ENCODE measurements at regions of chr3 and their contacts with region 1.

Region 1: DNA sequence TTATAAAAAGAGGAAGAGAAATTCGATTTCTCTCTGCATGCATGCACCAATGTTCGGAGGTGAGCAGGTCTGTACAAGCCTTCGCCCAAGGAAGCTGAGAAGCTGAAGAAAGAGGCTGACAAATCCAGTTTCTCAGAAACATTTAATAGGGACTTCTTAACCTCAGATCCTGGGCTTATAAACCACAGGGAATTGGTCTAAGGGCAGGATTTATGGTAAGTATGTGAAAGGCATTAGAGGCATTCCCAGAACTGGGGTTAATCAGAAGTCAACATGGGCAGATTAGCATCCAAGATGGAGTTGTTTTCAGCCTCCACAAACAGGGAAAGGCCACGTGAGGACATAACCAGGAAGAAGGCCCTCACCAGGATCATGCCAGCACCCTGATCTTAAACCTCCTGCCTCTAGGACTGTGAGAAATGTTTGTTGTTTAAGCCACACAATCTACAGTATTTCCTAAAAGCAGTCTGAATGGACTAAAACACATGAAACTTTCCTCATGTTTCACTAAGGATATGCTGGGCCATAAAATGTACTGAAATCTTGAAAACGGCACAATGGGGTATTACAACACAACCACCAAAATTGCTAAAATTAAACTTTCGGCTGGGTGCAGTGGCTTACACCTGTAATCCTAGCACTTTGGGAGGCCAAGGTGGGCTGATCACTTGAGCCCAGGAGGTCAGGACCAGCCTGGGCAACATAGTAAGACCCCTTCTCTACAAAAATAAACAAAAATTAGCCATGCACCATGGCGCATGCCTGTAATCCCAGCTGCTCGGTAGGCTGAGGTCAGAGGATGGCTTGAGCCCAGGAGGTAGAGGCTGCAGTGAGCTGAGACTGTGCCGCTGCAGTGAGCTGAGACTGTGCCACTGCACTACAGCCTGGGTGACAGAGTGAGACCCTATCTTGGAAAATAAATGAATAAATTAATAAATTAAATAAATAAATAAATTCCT is 11.2 kb downstream of the SHISA5 start:
- DNase-seq: no peak
- ATAC-seq: peak; percentile 98
- H3K4me3 Mint-ChIP-seq: peak overlapping the region; percentile 38
- H3K27ac Mint-ChIP-seq: no peak overlapping the region
- H3K4me1 Mint-ChIP-seq: peaks cover 8% of the 10 kb centered on the region
- H3K27me3 Mint-ChIP-seq: no peaks in the 10 kb centered on the region
- CTCF ChIP-seq: no peak

Region 2: DNA sequence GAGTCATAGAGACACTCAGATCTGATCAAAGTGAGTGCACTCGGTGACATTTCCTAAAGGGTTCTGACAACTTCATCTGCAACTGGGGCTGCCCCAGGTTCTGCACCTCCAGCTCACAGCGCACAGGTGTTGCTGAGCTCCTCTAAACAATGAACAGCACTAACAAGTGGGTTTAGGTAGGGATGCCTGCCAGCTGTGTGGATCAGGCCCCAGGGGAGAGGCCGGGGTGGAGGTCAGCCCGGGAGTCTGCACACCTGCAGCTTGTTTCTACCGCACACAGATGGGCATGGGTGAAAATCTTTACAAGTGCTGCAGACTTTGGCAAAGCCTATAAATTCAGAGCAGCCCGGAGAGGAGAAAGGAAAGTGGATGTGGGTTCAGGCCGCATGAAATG is 120.4 kb before region 1 on chr3:
- CTCF ChIA-PET with region 1: no interaction called
- POLR2A ChIA-PET with region 1: no interaction called
- intact Hi-C with region 1: no loop called
- DNase-seq: no peak
- ATAC-seq: no peak
- H3K4me3 Mint-ChIP-seq: no peak overlapping the region
- H3K27ac Mint-ChIP-seq: no peak overlapping the region
- H3K4me1 Mint-ChIP-seq: no peaks in the 10 kb centered on the region
- H3K27me3 Mint-ChIP-seq: no peaks in the 10 kb centered on the region
- CTCF ChIP-seq: no peak

Region 3: DNA sequence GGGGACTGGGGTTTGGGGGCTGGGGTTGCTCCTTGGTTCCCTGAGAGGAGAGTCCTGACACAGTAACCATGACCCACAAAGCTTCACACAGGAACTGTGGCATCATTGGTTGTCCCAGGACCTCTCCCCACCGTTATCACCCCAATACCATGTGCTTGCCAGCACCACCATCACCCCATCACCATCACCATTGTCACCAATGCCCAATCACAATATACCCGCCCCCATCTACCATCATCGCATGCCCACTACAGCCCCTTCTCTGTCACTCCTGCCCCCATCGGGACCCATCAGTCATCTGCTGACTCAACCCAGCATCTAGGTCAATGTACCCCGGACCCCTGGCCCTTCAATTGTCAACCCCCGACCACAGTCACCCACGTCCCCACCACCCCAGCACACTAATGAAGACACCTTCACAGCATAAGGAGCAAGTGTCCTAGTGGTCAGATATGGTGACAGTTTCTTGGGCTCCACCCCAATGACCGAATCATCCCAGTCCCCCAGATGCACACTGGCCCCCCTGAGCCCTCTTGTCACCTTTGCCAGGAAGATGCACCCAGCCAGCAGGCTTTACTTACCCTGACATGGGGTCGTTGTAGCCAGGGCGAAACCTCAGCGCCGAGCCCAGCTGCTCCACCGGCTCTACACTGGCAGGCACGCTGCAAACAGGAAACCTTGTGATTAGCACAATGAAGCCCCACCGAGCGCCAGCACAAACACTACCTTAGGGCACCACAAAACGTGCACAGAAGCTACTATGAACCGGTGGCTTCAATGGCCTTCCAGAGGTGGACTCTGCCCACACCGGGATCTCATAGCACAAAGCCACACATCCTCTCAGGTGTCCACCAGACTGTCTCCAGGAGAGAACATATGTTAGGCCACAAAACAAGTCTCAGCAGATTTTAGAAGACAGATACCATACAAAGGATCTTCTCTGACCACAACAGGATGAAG is 13.9 kb before region 1 on chr3:
- CTCF ChIA-PET with region 1: no interaction called
- POLR2A ChIA-PET with region 1: interaction called, 17 read pairs
- intact Hi-C with region 1: loop called (anchors 2 kb)
- DNase-seq: no peak
- ATAC-seq: peak; percentile 81
- H3K4me3 Mint-ChIP-seq: peak overlapping the region; percentile 72
- H3K27ac Mint-ChIP-seq: peak overlapping the region; percentile 97
- H3K4me1 Mint-ChIP-seq: peaks cover 50% of the 10 kb centered on the region
- H3K27me3 Mint-ChIP-seq: no peaks in the 10 kb centered on the region
- CTCF ChIP-seq: no peak

Region 4: DNA sequence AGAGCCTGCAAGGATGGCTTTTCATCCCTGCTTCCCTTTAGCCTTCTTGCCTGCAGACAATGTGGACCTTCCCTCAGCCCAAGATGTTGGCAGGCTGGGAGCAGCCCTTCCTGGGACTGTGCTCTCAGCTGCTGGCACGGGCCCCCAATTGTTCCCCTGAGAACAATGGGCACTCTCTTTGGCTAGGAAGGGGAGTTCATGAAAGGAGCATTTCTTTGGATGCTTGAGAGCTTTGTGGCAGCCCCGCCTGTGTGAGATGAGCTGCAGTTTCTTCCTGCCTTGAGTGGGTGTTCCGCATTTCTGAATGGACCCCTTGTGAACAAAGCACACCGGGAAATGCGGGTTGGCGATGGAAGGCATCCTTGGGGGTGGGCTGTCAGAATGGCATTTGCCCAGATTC is 1026.5 kb after region 1 on chr3:
- CTCF ChIA-PET with region 1: no interaction called
- POLR2A ChIA-PET with region 1: no interaction called
- intact Hi-C with region 1: no loop called
- DNase-seq: no peak
- ATAC-seq: no peak
- H3K4me3 Mint-ChIP-seq: no peak overlapping the region
- H3K27ac Mint-ChIP-seq: no peak overlapping the region
- H3K4me1 Mint-ChIP-seq: peaks cover 10% of the 10 kb centered on the region
- H3K27me3 Mint-ChIP-seq: no peaks in the 10 kb centered on the region
- CTCF ChIP-seq: no peak